Activated naive CD4-positive, alpha-beta T cell treated with anti-CD3 and anti-CD28 coated beads for 36 hours (primary cell): ENCODE measurements at regions of chr16 and their contacts with region 1.

Region 1: GRCh38 chr16:11915644-11916523 is at the start of gene GSPT1:
- DNase-seq: peak; percentile 100
- H3K4me3 Mint-ChIP-seq: peak within 1 kb of the TSS; percentile 91
- H3K27ac Mint-ChIP-seq: peak within 1 kb of the TSS; percentile 94
- H3K4me1 Mint-ChIP-seq: peaks cover 32% of the 10 kb centered on the region
- H3K27me3 Mint-ChIP-seq: no peaks in the 10 kb centered on the region
- total RNA-seq, gene GSPT1: 165 to 175 TPM

Region 2: DNA sequence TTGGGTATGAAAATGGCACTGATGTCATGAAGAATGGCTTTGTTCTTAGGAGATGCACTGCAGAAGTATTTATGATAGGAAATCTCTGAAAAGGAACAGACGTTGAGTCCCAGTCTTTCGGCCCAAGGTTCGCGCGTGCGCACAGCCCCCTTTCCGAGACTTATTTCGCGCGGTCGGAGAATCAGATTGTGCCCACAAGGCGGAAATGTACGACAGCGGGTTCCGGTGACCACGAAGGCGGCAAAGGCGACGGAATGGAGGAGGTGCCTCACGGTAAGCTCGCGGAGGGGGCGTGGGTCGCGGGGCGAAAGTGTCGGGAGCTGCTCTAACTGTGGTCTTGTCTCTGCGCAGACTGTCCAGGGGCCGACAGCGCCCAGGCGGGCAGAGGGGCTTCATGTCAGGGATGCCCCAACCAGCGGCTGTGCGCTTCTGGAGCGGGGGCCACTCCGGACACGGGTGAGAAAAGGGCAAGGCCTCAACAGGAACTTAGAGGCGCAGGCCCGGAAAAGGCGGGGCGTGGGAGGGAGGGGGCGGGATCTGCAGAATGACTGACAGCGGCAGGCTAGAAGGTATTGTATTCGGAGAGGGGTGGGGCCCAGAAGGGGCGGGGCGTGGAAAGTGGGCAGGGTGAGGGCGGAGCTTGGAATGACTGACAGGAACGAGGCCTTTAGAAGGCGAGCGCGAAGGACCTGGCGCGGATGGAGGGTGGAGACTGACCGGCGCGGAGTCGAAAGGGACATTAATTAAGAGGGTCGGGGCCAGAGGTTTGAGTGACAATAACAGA is 1172.1 kb before region 1 on chr16 and contains the start of gene NUBP1:
- CTCF ChIA-PET with region 1: no interaction called
- intact Hi-C with region 1: loop called (anchors 5 kb)
- DNase-seq: peak; percentile 100
- H3K4me3 Mint-ChIP-seq: peak within 1 kb of the TSS; percentile 90
- H3K27ac Mint-ChIP-seq: peak within 1 kb of the TSS; percentile 100
- H3K4me1 Mint-ChIP-seq: peaks cover 26% of the 10 kb centered on the region
- H3K27me3 Mint-ChIP-seq: no peaks in the 10 kb centered on the region
- total RNA-seq, gene NUBP1: 22.3 to 23.0 TPM

Region 3: GRCh38 chr16:11667824-11668622 is 247.9 kb before region 1 on chr16 and contains the start of gene SNN:
- CTCF ChIA-PET with region 1: no interaction called
- intact Hi-C with region 1: loop called (anchors 5 kb)
- DNase-seq: peak; percentile 89
- H3K4me3 Mint-ChIP-seq: peak within 1 kb of the TSS; percentile 72
- H3K27ac Mint-ChIP-seq: no peak within 1 kb of the TSS
- H3K4me1 Mint-ChIP-seq: peaks cover 71% of the 10 kb centered on the region
- H3K27me3 Mint-ChIP-seq: no peaks in the 10 kb centered on the region
- total RNA-seq, gene SNN: 12.0 to 13.6 TPM

Region 4: DNA sequence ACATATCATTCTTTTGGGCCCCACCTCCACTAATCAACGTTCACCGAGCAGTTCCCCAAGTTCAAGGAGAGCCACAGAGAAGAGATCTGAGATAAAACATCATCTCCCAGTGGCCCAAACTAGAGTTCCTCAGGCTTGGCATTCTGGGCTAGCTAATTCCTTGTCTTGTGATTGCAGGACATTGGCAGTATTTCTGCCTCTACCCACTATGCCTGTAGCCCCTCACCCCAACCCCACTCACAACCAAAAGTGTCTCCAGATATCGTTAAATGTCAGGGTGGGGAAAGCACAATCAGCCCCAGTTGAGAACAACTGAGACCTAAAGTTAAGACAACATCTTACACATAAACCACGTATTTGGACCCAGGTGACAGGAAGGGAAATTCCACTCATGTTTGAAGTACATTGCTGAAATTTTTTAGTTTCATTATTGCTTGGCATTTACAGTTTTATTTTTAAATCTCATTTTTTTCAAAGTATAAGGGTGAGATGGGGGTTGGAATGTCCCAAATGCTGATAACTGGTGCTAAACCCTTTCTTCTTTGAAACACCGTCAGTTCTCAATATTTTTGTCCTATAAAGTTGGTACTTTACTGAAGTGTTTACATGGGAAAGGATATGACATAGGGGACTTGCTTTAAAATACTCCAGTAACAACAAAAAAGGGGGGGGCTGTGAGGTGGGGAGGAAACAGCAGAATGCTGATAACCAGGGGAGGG is 132.4 kb before region 1 on chr16:
- CTCF ChIA-PET with region 1: no interaction called
- intact Hi-C with region 1: loop called (anchors 5 kb)
- DNase-seq: peak; percentile 79
- H3K4me3 Mint-ChIP-seq: peak overlapping the region; percentile 71
- H3K27ac Mint-ChIP-seq: peak overlapping the region; percentile 98
- H3K4me1 Mint-ChIP-seq: peaks cover 72% of the 10 kb centered on the region
- H3K27me3 Mint-ChIP-seq: no peaks in the 10 kb centered on the region

Region 5: DNA sequence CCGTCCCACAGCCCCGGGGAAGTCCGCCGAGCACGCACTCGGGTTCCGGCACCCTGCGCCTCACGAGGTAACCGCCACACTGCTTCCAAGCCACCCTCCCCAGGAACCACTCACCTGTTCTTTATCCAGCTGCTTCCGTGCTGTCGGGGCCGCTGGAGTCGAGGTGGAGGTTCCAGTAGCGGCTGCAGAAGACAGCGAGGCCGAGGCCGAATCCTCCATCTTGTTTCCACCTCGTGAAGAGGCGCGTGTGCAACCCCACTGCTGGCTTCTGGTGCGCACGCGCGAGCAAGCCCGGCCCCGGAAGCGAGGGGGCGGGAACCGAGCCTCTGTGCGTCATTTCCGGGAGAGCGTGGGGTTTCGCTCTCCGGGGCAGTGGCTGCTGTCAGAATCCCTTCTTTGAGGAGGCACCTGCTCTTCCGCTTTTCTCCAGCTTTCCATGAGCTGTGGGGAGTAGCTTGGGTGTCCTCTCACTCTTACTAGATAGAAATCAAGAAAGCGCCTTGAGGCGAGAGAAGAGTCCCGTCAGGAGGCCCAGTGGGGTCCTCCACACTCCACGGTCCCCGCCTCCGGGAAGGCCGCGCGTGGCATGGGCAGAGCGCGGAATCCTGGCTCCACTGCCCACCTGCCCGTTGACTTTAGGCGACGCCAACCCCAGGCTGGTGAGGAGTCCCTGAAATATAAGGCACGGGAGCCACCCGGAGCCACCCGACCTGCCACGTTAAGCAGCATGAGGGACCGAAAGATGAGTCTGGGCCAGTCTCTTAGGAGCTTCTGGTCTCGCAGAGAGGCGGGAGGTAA is 64.4 kb before region 1 on chr16 and contains the start of gene RSL1D1:
- CTCF ChIA-PET with region 1: no interaction called
- intact Hi-C with region 1: loop called (anchors 1 kb)
- DNase-seq: peak; percentile 93
- H3K4me3 Mint-ChIP-seq: peak within 1 kb of the TSS; percentile 98
- H3K27ac Mint-ChIP-seq: peak within 1 kb of the TSS; percentile 90
- H3K4me1 Mint-ChIP-seq: peaks cover 61% of the 10 kb centered on the region
- H3K27me3 Mint-ChIP-seq: no peaks in the 10 kb centered on the region
- total RNA-seq, gene RSL1D1: 354 to 365 TPM

Region 6: GRCh38 chr16:11977376-11978041 is 61.6 kb after region 1 on chr16:
- CTCF ChIA-PET with region 1: no interaction called
- intact Hi-C with region 1: loop called (anchors 1 kb)
- DNase-seq: no peak
- H3K4me3 Mint-ChIP-seq: peak overlapping the region; percentile 96
- H3K27ac Mint-ChIP-seq: no peak overlapping the region
- H3K4me1 Mint-ChIP-seq: peaks cover 34% of the 10 kb centered on the region
- H3K27me3 Mint-ChIP-seq: no peaks in the 10 kb centered on the region

Region 7: DNA sequence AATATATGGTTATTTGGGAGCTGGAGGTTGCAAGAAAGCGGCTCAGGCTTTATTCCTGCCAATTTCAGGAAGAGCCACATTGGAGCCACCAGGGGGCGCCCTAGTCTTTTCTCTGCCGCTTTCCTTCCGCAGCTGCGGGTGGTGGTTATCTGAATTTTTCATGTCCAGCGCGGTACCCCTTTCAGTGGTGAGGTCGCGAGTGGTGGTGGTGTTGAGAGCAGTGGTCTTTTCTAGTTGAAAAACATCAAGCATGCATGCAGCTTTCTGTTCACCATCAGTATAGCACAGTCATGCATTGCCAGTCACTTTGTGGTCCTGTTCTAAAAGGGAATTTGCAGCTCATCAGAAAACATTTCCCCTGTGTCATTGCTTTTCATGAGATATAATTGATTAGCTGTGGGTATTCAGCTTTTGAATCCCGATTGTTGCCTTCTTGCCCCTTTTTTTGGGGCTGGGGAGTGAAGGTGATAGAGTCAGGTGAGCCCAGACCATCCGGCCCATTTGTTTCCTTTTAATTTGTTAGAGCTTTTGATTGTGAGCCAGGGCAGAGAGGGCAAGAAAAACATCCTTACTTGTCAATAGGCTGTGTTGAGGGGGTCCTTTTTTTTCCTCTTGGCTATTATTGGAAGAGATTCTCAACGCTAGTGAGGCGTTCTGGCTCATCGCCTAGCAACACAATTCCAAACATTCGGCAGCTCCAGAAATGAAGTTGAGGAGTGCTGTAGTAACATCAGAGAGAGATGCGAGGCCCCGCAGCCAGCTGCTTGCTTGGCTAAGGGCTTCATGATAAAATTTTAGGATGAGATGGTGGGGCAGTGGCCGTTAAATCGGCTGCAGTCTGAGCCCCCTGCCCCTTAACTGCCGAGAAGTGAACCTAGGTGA is 179.6 kb after region 1 on chr16:
- CTCF ChIA-PET with region 1: no interaction called
- intact Hi-C with region 1: no loop called
- DNase-seq: peak; percentile 74
- H3K4me3 Mint-ChIP-seq: peak overlapping the region; percentile 50
- H3K27ac Mint-ChIP-seq: no peak overlapping the region
- H3K4me1 Mint-ChIP-seq: peaks cover 11% of the 10 kb centered on the region
- H3K27me3 Mint-ChIP-seq: no peaks in the 10 kb centered on the region